ENCODE measurements at regions of chr6 and their contacts with region 1.

Region 1: GRCh38 chr6:151451950-151452749 is at the start of gene RMND1:
- DNase-seq: peak; percentile 99 to 100 (median 99)
- H3K4me3 ChIP-seq: peak within 1 kb of the TSS; percentile 68 to 100 (median 91)
- H3K27ac ChIP-seq: peak within 1 kb of the TSS; percentile 77 to 99 (median 96)
- H3K27me3 ChIP-seq: no peaks in the 10 kb centered on the region
- CTCF ChIP-seq: peak in 28 of 56 donors; percentile 2 to 50 (median 22)
- total RNA-seq, gene RMND1: 16.2 to 37.8 (median 25.1) TPM

Region 2: GRCh38 chr6:151181706-151182363 is 270.3 kb before region 1 on chr6:
- intact Hi-C with region 1: no loop called
- DNase-seq: no peak
- H3K4me3 ChIP-seq: no peak overlapping the region
- H3K27ac ChIP-seq: no peak overlapping the region
- H3K27me3 ChIP-seq: peaks cover 0 to 5% (median 0%) of the 10 kb centered on the region in 45 donors
- CTCF ChIP-seq: no peak

Region 3: GRCh38 chr6:151390276-151391032 is 61.7 kb before region 1 on chr6:
- intact Hi-C with region 1: loop called (anchors 1 kb)
- DNase-seq: peak; percentile 88 to 98 (median 96)
- H3K4me3 ChIP-seq: peak overlapping the region; percentile 49 to 99 (median 94)
- H3K27ac ChIP-seq: peak overlapping the region; percentile 93 to 100 (median 99)
- H3K27me3 ChIP-seq: no peaks in the 10 kb centered on the region
- CTCF ChIP-seq: peak in 13 of 56 donors; percentile 2 to 33 (median 16)

Region 4: DNA sequence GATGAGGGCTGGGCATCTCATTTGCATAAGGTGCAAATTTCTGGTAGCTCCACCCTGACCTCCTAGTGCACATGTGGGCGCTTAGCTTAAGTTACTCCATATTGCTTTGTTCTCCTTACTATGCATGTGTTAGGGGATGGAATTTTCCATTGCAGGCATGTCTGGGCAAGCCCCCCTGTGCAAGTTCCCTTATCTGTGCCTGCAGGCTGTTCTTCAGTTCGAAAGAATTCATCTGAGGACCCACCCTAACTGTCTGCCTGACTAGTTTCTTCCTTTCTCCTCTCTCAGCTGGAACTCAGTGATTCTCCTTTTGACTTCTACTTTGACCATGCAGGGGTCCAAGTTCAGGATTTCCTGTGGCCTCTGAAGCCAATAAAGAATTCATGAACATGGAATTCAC is 71.9 kb after region 1 on chr6:
- intact Hi-C with region 1: no loop called
- DNase-seq: no peak
- H3K4me3 ChIP-seq: no peak overlapping the region
- H3K27ac ChIP-seq: no peak overlapping the region
- H3K27me3 ChIP-seq: no peaks in the 10 kb centered on the region
- CTCF ChIP-seq: no peak

Region 5: DNA sequence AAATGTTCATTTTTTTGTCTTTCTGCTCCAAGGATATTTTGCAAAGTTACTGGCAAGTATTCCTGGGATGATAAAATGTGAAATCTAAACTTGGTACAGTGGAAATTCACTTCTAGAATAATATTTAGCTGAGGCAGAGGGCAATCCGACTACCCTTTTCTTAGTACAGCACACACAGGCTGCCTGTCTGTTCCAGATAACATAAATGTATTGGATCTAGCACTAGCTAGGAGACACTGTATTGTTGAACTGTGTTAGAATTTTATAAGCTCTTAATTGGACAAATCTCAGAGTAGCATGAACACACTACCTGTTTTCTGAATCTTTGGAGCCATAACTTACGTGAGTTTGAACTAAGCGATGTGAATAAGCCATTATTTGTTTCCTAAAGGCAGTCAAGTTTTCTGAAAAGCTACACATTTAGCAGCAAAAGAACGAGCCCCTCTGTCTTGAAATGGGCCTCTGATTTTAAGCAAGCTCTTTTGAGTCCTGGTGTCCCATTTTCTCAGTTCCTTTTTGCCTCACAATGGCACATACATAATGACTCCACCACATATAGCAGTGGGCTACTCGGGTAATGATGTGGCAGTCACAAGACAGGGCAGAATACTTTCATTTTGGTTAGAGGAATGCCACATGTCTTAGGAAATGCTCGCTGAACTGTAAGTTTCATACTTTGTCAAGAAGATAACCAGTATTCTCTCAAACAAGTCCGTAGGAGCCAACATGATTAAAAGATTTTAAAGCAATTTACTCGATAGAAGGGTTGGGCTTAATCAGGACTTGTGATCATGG is 238.8 kb after region 1 on chr6:
- intact Hi-C with region 1: no loop called
- DNase-seq: no peak
- H3K4me3 ChIP-seq: peak overlapping the region in 52 of 59 donors; percentile 0 to 53 (median 30)
- H3K27ac ChIP-seq: peak overlapping the region in 25 of 59 donors; percentile 1 to 71 (median 31)
- H3K27me3 ChIP-seq: no peaks in the 10 kb centered on the region
- CTCF ChIP-seq: no peak